ENCODE measurements at regions of chrX and their contacts with region 1.

Region 1: DNA sequence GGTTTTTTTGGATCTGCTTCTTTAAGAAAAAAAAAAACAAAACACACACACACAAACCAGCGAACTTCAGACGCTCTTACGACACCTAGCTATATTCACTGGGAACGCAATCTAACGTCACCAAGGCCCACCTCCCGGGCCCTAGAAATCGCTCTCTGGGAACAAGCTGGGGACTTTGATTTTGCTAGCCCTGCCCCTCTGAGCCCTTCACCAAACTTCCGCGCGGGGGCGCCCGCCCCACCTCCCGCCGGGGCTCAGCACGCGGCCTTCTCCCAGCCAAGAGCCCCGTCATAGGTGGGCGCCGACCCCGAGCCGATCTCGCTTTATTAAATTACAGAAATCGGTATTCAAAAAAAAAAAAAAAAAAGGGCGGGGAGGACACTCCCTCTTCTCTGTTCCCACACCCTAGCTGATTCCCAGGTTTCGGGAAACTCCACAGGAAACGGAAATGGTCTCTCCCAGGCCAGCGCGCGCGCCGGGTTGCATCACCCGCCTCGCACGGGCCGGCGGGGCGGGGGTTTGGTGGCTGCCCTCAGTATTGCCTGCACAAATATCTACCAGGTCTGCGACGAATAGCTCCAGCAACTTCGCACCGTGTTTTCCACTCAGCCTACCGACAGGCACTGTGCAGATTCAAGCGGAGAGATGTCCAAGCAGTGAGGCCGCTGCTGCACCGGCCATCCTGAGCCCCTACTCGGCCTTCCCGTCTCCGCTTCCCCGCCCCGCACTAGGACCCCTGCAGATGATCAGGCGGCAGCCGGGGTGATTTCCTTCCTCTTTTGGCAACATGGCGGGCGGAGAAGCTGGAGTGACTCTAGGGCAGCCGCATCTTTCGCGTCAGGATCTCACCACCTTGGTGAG is at the start of gene EIF2S3:
- DNase-seq: peak; percentile 96
- total RNA-seq, gene EIF2S3: 105 TPM

Region 2: DNA sequence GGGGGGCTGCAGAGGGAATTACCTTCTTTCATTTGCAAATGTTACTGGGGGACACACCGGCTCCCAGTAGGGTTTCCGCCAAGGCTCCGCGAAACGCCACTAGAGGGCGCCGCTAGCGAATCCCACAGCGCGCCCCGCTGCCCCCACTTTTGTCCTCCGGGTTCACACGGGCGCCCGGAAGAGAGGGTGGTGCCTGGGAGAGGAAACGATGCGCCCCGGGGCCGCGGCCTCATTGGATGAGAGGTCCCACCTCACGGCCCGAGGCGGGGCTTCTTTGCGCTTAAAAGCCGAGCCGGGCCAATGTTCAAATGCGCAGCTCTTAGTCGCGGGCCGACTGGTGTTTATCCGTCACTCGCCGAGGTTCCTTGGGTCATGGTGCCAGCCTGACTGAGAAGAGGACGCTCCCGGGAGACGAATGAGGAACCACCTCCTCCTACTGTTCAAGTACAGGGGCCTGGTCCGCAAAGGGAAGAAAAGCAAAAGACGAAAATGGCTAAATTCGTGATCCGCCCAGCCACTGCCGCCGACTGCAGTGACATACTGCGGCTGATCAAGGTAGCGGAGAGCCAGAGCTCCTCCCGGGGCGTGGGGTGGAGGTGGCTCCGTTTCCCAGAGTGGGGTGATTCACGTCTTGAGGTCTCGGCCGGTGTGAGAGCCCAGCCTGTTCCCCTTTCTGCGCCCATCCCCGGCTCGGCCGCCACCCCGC is 271.4 kb before region 1 on chrX and contains the start of gene SAT1:
- intact Hi-C with region 1: loop called (anchors 2 kb)
- DNase-seq: peak; percentile 97
- total RNA-seq, gene SAT1: 156 TPM

Region 3: GRCh38 chrX:23907498-23908218 is 146.8 kb before region 1 on chrX and contains the starts of genes APOO and CXorf58:
- intact Hi-C with region 1: loop called (anchors 2 kb)
- DNase-seq: peak; percentile 95
- total RNA-seq, gene APOO: 76.4 TPM
- total RNA-seq, gene CXorf58: not detected

Region 4: DNA sequence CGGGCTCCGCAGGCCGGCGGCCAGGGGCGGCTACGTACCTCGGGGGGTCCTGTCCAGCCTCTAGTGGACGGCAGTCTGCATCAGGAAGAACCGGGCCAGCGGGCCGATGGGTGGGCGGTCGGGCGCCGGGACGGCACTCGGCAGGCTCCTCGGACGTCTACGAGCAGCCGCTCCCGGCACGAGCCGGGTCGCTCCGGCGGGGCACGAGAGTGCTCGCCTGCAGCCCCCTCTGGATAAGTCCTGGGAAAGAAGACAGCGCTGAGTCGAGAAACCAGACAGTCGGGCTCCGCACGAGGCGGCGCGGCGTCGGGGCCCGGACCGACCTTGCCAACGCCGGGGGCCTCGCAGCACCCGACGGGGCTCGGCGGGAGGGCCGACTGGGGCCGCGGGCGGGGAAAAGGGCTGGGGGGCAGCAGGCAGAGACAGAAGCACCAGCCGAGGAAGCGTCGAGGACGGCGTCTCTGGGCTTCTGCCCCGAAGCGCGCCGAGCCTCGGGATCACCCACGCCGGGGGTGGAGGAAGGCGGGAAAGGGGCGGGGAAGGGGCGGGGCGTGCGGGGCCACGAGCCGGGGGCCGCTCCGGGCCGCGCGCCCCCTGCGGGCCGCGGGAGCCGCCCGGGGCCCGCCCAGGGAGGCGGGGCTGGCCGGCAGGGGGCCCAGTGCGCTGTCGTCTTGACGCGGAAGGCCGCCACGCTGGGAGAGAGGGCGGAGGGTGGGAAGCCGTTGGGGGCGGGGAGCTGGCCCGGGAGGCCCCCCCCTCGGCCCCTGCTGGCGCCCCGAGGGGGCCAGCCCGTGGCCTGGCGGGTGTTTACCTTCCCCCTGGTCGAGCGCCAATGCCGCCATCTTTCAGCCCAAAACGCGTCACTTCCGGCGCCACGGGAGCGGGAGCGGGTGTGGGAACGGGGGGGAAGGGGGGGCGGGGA is 29.3 kb before region 1 on chrX:
- intact Hi-C with region 1: loop called (anchors 2 kb)
- DNase-seq: peak; percentile 93

Region 5: GRCh38 chrX:24150051-24150790 is 95.8 kb after region 1 on chrX:
- intact Hi-C with region 1: loop called (anchors 1 kb)
- DNase-seq: peak; percentile 96

Measured in cardiac septum (tissue), 1 donor.